Activated naive CD4-positive, alpha-beta T cell treated with anti-CD3 and anti-CD28 coated beads for 36 hours (primary cell): ENCODE measurements at regions of chr1 and their contacts with region 1.

Region 1: GRCh38 chr1:151281969-151282882 is at the start of gene ZNF687:
- DNase-seq: peak; percentile 100
- H3K4me3 Mint-ChIP-seq: peak within 1 kb of the TSS; percentile 98
- H3K27ac Mint-ChIP-seq: peak within 1 kb of the TSS; percentile 99
- H3K4me1 Mint-ChIP-seq: peaks cover 35% of the 10 kb centered on the region
- H3K27me3 Mint-ChIP-seq: no peaks in the 10 kb centered on the region
- total RNA-seq, gene ZNF687: 20.9 to 22.0 TPM

Region 2: GRCh38 chr1:151165738-151166505 is 116.3 kb before region 1 on chr1 and contains the starts of genes LYSMD1 and SCNM1:
- CTCF ChIA-PET with region 1: no interaction called
- intact Hi-C with region 1: loop called (anchors 1 kb)
- DNase-seq: peak; percentile 99
- H3K4me3 Mint-ChIP-seq: peak within 1 kb of the TSS; percentile 92
- H3K27ac Mint-ChIP-seq: peak within 1 kb of the TSS; percentile 90
- H3K4me1 Mint-ChIP-seq: peaks cover 51% of the 10 kb centered on the region
- H3K27me3 Mint-ChIP-seq: no peaks in the 10 kb centered on the region
- total RNA-seq, gene LYSMD1: 4.5 to 4.8 TPM
- total RNA-seq, gene SCNM1: 60.5 to 64.2 TPM

Region 3: DNA sequence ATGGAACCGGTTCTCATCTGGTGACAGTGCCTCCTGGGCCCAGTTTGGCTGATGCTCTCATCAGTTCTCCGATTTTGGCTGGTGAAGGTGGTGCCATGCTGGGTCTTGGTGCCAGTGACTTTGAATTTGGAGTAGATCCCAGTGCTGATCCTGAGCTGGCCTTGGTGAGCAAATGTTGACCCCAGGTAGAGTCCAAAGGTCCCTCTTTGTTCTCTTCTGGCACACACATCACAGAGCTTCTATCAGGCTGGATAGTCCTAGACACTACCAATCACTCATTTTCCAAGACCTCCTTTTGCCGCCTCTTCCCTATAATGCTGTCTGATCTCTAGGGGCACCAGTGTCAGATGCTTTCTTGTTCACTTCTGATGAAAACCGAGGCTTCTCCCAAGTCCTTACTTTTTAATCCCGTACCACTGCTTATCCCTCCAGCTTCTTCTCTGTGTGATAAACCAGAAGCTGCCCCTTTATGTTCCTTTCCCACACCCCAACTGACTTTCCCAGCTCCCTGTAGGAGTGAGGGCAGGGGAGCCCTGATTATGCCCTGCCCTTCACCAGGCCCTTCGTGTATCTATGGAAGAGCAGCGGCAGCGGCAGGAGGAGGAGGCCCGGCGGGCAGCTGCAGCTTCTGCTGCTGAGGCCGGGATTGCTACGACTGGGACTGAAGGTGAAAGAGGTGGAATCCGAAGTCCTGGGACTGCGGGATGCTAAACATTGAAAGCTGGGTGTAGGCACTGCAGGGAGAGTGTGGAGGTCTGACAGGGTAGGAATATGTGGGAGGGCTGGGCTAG is 16.6 kb before region 1 on chr1:
- CTCF ChIA-PET with region 1: no interaction called
- intact Hi-C with region 1: no loop called
- DNase-seq: no peak
- H3K4me3 Mint-ChIP-seq: no peak overlapping the region
- H3K27ac Mint-ChIP-seq: no peak overlapping the region
- H3K4me1 Mint-ChIP-seq: no peaks in the 10 kb centered on the region
- H3K27me3 Mint-ChIP-seq: no peaks in the 10 kb centered on the region

Region 4: GRCh38 chr1:151311589-151312331 is 29.5 kb after region 1 on chr1:
- CTCF ChIA-PET with region 1: interaction called, 13 read pairs
- intact Hi-C with region 1: loop called (anchors 1 kb)
- DNase-seq: peak; percentile 94
- H3K4me3 Mint-ChIP-seq: no peak overlapping the region
- H3K27ac Mint-ChIP-seq: peak overlapping the region; percentile 92
- H3K4me1 Mint-ChIP-seq: peaks cover 37% of the 10 kb centered on the region
- H3K27me3 Mint-ChIP-seq: no peaks in the 10 kb centered on the region

Region 5: DNA sequence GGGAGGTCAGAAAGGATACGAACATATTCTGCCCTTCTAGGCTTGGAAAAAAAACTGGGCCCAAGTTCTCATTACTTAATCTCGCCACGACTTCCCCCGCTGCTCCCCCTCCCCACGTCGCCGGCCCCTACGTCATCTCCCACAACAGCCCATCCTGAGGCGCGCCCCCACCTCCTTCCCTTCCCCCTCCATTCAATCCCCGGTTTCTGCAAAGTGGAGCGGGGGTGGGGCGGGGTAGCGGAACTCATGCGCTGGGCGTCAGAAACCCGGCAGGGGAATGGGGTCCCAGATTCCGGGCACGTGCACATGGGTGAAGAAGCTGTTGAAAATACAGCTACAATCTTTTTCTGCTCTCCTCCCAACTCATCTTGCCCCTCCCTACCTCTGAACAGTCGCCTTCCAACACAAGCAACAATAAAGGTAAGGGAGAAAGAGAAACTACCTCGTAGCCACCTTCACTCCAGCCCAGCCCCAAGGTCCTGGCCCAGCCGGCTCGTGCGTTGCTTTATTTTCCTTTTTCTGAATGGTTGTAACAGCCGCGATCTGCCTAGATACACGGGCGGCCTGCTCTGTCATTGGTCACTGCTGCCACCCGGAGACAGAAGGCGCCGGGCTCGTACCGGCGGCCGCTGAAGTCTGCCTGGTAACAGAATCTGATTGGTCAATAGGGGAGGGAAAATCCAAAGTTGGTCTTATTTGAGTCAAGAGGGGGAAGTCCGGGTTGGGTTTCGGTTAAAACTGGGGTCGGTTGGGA is 64.7 kb after region 1 on chr1 and contains the start of gene RFX5:
- CTCF ChIA-PET with region 1: interaction called, 3 read pairs
- intact Hi-C with region 1: loop called (anchors 1 kb)
- DNase-seq: peak; percentile 97
- H3K4me3 Mint-ChIP-seq: peak within 1 kb of the TSS; percentile 93
- H3K27ac Mint-ChIP-seq: peak within 1 kb of the TSS; percentile 96
- H3K4me1 Mint-ChIP-seq: peaks cover 33% of the 10 kb centered on the region
- H3K27me3 Mint-ChIP-seq: no peaks in the 10 kb centered on the region
- total RNA-seq, gene RFX5: 62.3 to 63.4 TPM

Region 6: DNA sequence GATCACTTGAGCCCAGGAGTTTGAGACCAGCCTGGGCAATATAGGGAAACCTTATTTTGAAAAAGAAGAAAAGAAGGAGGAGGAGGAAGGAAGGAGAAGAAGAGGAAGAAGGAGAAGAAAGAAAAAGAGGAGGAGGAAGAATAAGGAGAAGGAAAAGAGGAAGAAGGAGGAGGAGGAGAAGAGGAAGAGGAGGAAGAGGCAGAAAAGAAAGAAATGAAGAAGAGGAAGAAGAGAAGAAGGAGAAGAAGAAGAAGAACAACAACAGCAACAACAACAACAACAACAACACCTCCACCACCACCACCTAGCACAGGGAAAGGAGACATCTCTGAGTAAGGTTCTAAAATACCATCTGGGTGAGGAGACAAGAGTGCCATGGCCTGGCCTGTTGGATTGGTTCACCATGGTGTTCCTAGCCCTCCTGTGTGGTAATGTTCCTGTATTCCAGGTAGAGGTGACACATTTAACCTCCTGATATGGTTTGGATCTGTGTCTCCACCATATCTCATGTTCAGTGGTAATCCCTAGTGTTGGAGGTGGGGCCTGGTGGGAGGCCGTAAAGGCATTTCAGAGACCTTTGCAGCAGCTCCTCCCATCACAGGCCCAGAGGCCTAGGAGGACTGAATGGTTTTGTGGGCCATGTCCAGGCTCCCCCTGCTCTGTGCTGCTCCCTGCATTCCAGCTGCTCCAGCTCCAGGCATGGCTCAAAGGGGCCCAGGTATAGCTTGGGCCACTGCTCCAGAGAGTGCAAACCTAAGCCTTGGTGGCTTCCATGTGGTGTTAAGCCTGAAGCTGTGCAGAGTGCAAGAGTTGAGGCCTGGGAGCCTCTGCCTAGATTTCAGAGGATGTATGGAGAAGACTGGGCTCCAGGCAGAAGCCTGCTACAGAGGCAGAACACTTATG is 79.9 kb after region 1 on chr1:
- CTCF ChIA-PET with region 1: no interaction called
- intact Hi-C with region 1: no loop called
- DNase-seq: no peak
- H3K4me3 Mint-ChIP-seq: no peak overlapping the region
- H3K27ac Mint-ChIP-seq: no peak overlapping the region
- H3K4me1 Mint-ChIP-seq: no peaks in the 10 kb centered on the region
- H3K27me3 Mint-ChIP-seq: no peaks in the 10 kb centered on the region

Region 7: GRCh38 chr1:151510957-151511635 is 228.9 kb after region 1 on chr1 and contains the start of gene CGN:
- CTCF ChIA-PET with region 1: no interaction called
- intact Hi-C with region 1: loop called (anchors 5 kb)
- DNase-seq: peak; percentile 87
- H3K4me3 Mint-ChIP-seq: peak within 1 kb of the TSS; percentile 80
- H3K27ac Mint-ChIP-seq: no peak within 1 kb of the TSS
- H3K4me1 Mint-ChIP-seq: peaks cover 25% of the 10 kb centered on the region
- H3K27me3 Mint-ChIP-seq: no peaks in the 10 kb centered on the region
- total RNA-seq, gene CGN: 0.62 to 1.5 TPM

Region 8: DNA sequence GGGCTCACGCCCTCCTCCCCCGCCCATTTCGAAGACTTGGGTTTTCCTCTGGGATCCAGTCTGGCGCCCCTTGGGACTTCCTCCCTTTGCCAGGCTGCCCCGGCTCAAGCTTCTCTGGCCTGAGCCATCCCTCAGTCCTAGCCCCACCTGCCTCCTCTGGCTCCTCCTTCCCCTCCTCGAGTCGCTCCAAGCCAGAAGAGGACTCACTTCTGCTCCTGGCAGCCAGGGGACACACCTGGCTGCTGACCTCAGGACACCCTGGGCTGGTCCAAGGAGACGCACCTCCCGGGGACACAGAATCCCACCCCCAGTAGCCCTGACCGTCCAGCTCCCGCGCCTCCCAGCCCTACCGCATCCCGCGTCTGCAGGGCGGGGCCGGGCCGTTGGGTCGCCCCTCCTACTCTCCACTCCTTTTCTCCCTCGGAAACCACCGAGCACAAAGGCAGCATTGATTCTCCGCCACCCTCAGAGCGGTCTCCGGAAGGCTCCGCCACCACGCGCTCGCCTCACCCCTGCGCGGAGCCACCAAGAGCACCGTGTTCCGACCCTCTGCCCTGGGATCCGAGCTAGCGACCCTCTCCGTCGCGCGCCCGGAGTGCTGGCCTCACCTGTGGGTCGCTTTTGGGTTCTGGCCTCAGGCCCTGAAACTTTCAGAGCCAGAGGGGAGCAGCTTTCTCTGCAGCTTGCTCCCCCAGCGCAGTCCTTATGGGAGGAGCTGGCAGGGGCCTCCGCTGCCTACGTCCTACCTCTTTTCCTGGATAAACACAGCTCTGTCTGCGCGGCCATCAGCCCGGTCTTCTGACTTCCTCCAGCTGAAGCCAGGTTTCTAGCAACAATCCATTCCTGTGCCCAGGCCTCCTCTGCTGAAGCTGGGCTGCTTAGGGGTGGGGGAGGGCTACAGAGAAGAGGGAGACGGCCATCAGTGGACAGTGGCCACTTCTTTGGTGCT is 557.5 kb after region 1 on chr1 and contains the start of gene C2CD4D:
- CTCF ChIA-PET with region 1: no interaction called
- intact Hi-C with region 1: loop called (anchors 5 kb)
- DNase-seq: peak; percentile 83
- H3K4me3 Mint-ChIP-seq: peak within 1 kb of the TSS; percentile 88
- H3K27ac Mint-ChIP-seq: peak within 1 kb of the TSS; percentile 83
- H3K4me1 Mint-ChIP-seq: peaks cover 34% of the 10 kb centered on the region
- H3K27me3 Mint-ChIP-seq: no peaks in the 10 kb centered on the region
- total RNA-seq, gene C2CD4D: 2.3 to 2.7 TPM